PC-3 (cell line): ENCODE measurements at regions of chr17 and their contacts with region 1.

Region 1: DNA sequence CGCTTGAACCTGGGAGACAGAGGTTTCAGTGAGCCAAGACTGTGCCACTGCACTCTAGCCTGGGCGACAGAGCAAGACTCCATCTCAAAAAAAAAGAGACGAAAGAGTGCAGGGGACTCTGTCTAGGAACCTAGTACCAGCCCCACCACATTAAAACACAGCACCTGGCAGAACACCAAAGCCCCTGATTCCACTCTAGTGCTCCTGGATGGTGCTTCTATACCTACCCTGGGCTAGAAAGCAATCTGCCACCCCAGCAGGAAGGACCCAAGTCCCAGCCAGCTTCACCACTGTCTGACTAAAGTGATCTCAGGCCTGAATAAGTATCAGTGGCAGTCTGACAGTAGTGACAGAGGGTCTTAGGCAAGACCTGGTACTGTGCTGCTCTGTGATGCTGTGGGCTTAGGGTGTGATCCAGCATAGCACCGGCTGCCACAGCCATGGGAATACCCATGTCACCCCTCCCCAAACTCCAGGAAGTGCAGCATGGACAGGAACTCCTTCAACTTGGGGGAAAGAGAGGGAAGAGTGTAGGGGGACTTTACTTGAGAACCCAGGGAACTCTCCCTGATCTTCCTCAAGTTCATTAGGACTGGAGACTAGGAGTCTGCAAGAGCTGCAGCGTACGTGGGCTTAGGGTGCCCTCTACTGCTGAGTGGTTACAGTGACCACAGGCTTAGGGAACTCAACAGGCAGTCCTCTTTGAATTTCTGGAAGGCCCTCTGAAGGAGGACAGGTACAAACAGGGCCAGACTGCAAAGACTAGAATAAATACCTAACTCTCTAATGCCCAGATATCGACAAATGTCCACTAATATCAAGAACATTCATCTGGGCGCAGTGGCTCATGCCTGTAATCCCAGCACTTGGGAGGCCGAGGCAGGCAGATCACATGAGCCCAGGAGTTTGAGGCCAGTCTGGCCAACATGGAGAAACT is 30.0 kb upstream of the RNF43 start:
- DNase-seq: peak; percentile 97
- ATAC-seq: peak; percentile 100
- H3K4me3 ChIP-seq: no peak overlapping the region
- H3K27ac ChIP-seq: no peak overlapping the region
- H3K4me1 ChIP-seq: no peaks in the 10 kb centered on the region
- H3K27me3 ChIP-seq: peaks cover 9% of the 10 kb centered on the region; the same call in 1 of the 2 replicates
- CTCF ChIP-seq: peak; percentile 96

Region 2: DNA sequence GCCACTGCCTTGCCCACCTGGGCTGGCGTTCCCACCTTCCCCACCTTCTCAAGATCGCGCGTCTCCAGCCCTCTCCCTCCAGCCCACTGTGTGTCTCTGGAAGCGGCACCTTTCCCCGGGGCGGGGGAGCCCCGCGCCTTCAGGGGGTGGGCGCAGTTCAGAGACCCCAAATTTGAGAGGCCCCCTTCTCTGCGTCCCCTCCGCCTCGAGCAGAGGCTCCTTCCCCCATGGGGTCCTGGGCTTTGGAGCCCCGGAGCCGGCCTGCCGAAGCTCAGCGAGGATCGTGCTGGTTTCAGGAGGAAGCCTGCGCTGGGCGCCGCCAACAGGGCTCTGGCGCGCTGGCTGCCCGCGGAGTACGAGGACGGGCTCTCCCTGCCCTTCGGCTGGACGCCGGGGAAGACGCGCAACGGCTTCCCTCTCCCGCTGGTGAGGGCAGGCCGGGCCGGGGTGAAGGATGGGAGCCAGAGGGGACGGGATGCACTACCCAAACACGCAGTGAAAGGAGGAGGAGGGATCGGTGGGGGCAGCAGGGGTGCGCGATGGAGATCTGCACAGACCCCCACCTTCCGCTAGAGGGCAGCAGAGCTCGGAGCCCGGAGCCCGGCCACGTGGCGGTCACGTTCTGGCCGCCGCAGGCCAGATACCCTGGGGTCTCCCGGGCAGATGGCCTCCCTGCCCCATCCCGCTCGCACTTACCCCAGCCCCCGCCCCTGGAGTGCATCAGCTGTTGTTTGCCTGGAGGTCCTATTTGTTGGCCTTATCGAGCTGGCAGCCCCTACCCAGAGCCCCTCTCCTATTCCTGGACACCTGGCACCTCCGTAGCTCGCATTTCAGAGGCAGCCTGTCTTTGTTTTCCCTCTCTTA is 197.8 kb before region 1 on chr17:
- CTCF ChIA-PET with region 1: no interaction called
- POLR2A ChIA-PET with region 1: no interaction called
- intact Hi-C with region 1: loop called (anchors 5 kb)
- DNase-seq: peak; percentile 58
- ATAC-seq: peak; percentile 81
- H3K4me3 ChIP-seq: peak overlapping the region; percentile 44
- H3K27ac ChIP-seq: no peak overlapping the region
- H3K4me1 ChIP-seq: peaks cover 5% of the 10 kb centered on the region; the same call in 1 of the 2 replicates
- H3K27me3 ChIP-seq: peaks cover 30% of the 10 kb centered on the region
- CTCF ChIP-seq: peak; percentile 94

Region 3: GRCh38 chr17:58263773-58264172 is 183.5 kb before region 1 on chr17:
- CTCF ChIA-PET with region 1: no interaction called
- POLR2A ChIA-PET with region 1: no interaction called
- intact Hi-C with region 1: loop called (anchors 5 kb)
- DNase-seq: no peak
- ATAC-seq: no peak
- H3K4me3 ChIP-seq: no peak overlapping the region
- H3K27ac ChIP-seq: no peak overlapping the region
- H3K4me1 ChIP-seq: no peaks in the 10 kb centered on the region
- H3K27me3 ChIP-seq: peaks cover 92% of the 10 kb centered on the region
- CTCF ChIP-seq: no peak

Region 4: DNA sequence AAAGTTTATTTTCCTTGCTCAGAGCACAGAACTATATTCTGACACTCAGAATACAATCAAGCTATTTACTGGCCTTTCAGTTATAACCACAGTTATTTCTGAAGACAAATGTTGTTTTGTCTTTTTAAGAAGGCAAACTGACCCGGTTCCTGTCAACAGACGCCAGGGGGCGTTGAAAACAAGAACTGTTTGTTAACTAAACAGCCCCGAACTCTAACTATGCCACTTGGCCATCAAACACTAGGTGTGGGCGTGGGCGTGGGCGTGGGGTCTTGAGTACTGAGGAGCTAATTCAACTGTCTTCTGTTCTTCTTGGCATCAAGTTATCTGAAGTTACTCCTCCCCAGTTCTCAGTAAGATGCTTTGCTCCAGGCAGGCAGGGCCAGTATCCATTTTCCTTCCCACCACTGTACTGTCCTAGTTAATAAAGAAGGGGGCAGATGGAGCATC is 130.4 kb after region 1 on chr17:
- CTCF ChIA-PET with region 1: no interaction called
- POLR2A ChIA-PET with region 1: no interaction called
- intact Hi-C with region 1: no loop called
- DNase-seq: peak; percentile 80
- ATAC-seq: peak; percentile 65
- H3K4me3 ChIP-seq: no peak overlapping the region
- H3K27ac ChIP-seq: no peak overlapping the region
- H3K4me1 ChIP-seq: peaks cover 9% of the 10 kb centered on the region
- H3K27me3 ChIP-seq: no peaks in the 10 kb centered on the region
- CTCF ChIP-seq: peak; percentile 94